ENCODE measurements at regions of chr18 and their contacts with region 1.

Region 1: GRCh38 chr18:61893971-61894750 is 1.4 kb upstream of the RNF152 start:
- DNase-seq: peak; percentile 83
- H3K4me3 ChIP-seq: peak overlapping the region; percentile 96
- H3K27ac ChIP-seq: no peak overlapping the region
- H3K4me1 ChIP-seq: peaks cover 9% of the 10 kb centered on the region; the same call in 1 of the 2 replicates
- H3K27me3 ChIP-seq: no peaks in the 10 kb centered on the region

Region 2: DNA sequence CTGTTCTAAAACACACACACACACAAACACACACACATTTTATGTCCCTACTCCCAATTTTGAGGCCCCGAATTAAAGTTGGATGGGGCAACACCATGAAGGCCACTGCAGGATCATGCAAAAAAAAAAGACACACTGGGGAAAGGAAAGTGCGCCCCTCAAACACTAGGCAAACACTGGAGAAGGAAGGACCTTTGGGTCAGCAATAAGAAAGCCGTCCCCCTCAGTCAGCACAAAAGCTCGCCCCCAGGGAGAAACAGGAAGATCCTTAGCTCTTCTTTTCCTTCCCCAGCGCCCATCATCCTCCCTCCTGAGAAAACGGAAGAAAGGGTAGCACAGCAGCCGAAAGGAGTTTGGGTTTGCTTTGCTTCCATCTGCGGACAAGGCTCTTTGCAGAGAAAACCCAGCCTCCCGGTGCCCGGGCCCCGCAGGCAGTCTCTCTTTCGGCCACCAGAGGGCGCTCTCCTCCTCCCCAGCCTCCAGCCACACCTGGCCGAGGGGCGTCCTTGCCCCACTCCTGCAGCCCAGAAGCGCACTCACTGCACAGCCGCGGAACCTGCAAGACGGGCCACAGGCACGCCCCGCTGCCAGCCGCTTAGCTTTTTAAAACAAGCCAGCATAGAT is 312.5 kb before region 1 on chr18:
- in situ Hi-C with region 1: loop called (anchors 10 kb)
- DNase-seq: peak; percentile 67
- H3K4me3 ChIP-seq: peak overlapping the region; percentile 71
- H3K27ac ChIP-seq: no peak overlapping the region
- H3K4me1 ChIP-seq: peaks cover 6% of the 10 kb centered on the region; the same call in 1 of the 2 replicates
- H3K27me3 ChIP-seq: no peaks in the 10 kb centered on the region

Region 3: GRCh38 chr18:61651883-61652268 is 242.3 kb before region 1 on chr18:
- in situ Hi-C with region 1: no loop called
- DNase-seq: no peak
- H3K4me3 ChIP-seq: no peak overlapping the region
- H3K27ac ChIP-seq: no peak overlapping the region
- H3K4me1 ChIP-seq: no peaks in the 10 kb centered on the region
- H3K27me3 ChIP-seq: no peaks in the 10 kb centered on the region

Measured in GM23248 (cell line).